GM18951 (cell line): ENCODE measurements at regions of chr6 and their contacts with region 1.

Region 1: DNA sequence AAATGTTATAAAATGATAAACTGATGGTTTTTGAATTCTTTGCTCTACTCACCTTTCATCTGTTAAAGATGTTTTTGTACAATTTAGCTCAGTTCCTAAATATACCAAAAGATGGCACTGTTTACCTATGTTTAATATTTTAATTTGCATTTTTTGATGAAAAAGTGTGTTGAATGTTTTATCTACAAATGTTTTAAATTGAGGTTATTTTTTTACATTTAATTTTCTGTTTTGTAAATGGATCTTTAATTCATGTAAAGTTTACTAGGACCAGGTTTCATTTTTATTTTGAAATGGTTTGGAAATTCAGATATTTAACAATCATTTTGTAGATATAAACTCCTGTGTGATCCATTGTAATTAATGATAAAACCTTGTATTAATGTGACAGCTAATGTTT is 30.0 kb downstream of the CDKAL1 start:
- POLR2A ChIP-seq: no peak

Region 2: GRCh38 chr6:21188505-21189223 is 624.4 kb after region 1 on chr6:
- in situ Hi-C with region 1: loop called (anchors 25 kb)
- POLR2A ChIP-seq: no peak

Region 3: DNA sequence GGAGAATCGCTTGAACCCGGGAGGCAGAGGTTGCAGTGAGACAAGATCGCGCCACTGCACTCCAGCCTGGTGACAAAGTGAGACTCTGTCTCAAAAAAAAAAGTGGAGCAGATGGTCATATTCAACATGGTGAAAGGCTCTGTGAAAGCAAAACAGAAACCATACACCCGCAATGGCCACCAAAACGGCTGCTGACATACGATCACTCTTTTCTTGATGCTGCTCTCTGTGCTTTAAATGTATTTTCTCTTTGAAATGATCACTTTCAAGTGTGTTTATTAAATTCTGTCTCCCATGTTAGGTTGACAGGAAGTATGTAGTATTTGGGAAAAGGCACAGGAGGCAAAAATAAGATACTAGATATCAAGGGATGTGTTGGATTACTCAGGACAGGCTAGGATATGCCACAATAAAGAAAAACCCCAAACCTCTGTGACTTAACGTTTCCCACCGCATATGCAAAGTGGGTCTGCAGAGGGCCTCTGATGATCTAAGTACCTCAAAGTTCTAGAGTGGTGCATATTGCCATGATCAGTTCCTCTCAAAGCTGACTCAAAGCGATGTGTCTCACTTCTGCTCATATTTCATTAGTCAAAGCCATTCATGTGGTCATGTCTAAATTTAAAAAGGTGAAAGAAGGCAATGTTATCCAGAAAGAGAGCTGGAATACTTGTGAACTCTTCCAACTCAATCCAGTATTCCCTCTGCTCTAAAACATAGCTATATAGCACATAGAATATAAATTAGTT is 874.1 kb after region 1 on chr6:
- in situ Hi-C with region 1: loop called (anchors 25 kb)
- POLR2A ChIP-seq: no peak